ENCODE measurements at regions of chr2 and their contacts with region 1.

Region 1: GRCh38 chr2:121128754-121129659 is 156.0 kb downstream of the TFCP2L1 start:
- DNase-seq: peak; percentile 81
- H3K4me3 Mint-ChIP-seq: no peak overlapping the region
- H3K27ac Mint-ChIP-seq: no peak overlapping the region
- H3K4me1 Mint-ChIP-seq: peaks cover 4% of the 10 kb centered on the region
- H3K27me3 Mint-ChIP-seq: peaks cover 22% of the 10 kb centered on the region
- CTCF ChIP-seq: peak; percentile 74

Region 2: DNA sequence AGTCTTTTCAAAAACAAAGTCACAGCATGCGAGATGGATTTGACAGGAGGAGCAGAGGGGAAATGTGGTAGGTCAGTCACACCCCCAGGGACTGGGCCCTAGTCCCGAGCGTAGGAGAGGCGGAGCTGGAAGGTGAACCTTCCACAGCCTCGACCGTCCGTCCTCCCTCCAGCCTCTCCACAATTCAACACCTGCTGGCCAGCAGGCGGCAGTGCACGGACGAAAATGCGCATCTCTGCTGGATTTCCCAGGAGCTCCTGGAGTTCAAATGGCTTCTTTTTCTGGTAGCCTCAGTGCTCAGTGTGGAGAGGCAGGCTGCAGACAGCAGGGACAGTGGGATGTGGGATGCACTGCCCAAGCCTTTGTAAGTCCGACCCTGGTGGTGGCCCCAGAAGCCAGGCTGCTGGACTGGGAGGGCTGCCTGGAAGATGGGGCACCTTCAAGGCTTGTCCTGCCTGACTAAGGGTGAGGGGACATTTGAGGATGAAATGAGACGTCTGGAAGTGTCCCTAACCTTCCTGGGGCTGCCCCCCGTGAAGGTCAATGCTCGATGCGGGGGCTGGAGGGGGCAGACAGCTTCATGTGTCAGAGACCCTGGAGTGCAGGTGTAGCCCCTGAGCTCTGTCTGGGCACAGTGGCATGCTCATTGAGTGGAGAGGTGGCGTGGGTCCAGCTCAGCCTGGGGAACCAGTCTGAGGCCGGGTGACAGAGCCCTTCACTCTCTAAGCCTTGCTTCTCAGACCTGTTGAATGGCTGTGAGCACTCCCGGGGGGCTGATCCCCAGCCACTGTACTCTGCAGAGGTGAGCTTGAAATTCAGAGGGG is 33.5 kb before region 1 on chr2:
- CTCF ChIA-PET with region 1: interaction called, 24 read pairs
- intact Hi-C with region 1: no loop called
- DNase-seq: peak; percentile 75
- H3K4me3 Mint-ChIP-seq: no peak overlapping the region
- H3K27ac Mint-ChIP-seq: no peak overlapping the region
- H3K4me1 Mint-ChIP-seq: peaks cover 9% of the 10 kb centered on the region
- H3K27me3 Mint-ChIP-seq: no peaks in the 10 kb centered on the region
- CTCF ChIP-seq: peak; percentile 84

Region 3: GRCh38 chr2:121205321-121205942 is 76.4 kb after region 1 on chr2:
- CTCF ChIA-PET with region 1: interaction called, 32 read pairs
- intact Hi-C with region 1: no loop called
- DNase-seq: peak; percentile 84
- H3K4me3 Mint-ChIP-seq: no peak overlapping the region
- H3K27ac Mint-ChIP-seq: peak overlapping the region; percentile 47
- H3K4me1 Mint-ChIP-seq: peaks cover 49% of the 10 kb centered on the region
- H3K27me3 Mint-ChIP-seq: no peaks in the 10 kb centered on the region
- CTCF ChIP-seq: no peak

Region 4: DNA sequence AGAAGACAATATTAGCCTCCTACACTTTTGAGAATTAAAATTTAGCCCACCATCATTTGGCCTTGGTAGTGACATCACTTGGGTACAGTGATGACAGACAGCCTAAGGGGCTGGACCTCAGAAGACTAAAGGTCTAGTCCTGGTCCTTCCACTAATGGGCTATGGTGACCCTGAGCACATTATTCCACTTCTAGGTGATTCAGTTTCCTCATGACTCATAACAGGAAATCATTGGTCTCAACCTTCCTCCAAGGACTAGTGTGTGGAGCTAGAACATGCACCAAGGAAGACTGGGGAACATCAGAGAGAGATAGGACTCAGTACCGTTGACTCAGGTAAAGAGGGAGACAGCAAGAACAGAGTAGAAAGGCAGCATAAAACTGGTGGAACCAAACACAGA is 92.0 kb after region 1 on chr2:
- CTCF ChIA-PET with region 1: interaction called, 19 read pairs
- intact Hi-C with region 1: no loop called
- DNase-seq: peak; percentile 26
- H3K4me3 Mint-ChIP-seq: no peak overlapping the region
- H3K27ac Mint-ChIP-seq: peak overlapping the region; percentile 73
- H3K4me1 Mint-ChIP-seq: peaks cover 9% of the 10 kb centered on the region
- H3K27me3 Mint-ChIP-seq: no peaks in the 10 kb centered on the region
- CTCF ChIP-seq: no peak

Region 5: DNA sequence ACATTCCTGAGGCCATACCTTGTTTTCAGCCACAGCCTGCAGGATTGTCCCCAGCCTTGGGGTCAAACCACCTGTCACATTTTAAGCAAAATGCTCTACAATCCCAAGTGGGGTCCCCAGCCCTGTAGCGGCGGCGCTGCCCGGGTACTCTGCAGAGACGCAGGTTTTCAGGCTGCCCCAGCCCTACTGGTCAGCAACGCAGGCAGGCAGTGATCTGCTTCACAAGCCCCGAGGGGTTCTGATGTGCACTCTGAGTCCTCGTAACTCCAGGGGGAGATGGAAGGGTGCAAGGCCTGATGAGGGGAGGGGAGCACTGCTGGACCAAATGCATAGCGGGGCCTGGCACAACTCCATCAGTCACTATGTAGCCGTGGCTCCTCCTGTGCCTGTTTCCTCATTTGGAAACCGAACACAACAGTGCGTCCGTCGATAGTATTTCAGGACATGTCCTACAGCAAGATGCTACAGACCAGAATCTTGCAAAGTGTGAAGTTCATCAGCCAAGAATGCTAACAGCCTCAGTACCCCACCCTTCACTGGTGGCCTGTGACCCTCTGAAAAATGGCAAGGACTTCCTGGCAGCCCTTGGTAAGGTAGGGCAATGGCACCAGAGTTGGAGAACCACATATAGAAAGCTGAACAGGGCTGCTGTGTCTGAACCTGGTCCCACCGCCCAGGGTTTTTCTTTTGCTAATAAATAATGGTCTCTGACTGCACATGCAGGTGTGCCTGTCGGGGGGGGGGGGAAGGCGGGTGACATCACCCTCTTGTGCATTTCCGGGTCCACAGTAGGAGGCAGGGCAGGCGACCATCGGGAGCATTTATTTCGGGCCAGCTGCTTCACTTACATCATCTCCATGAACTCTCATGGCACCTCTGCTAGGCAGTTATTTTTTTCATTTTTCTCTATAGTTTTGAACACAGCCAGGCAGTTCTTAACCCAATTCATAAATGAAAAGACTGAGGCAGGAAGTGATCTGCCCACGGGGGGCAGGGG is 206.6 kb after region 1 on chr2:
- CTCF ChIA-PET with region 1: interaction called, 14 read pairs
- intact Hi-C with region 1: no loop called
- DNase-seq: peak; percentile 40
- H3K4me3 Mint-ChIP-seq: peak overlapping the region; percentile 8
- H3K27ac Mint-ChIP-seq: peak overlapping the region; percentile 83
- H3K4me1 Mint-ChIP-seq: peaks cover 28% of the 10 kb centered on the region
- H3K27me3 Mint-ChIP-seq: no peaks in the 10 kb centered on the region
- CTCF ChIP-seq: no peak